ENCODE measurements at regions of chr2 and their contacts with region 1.

Region 1: DNA sequence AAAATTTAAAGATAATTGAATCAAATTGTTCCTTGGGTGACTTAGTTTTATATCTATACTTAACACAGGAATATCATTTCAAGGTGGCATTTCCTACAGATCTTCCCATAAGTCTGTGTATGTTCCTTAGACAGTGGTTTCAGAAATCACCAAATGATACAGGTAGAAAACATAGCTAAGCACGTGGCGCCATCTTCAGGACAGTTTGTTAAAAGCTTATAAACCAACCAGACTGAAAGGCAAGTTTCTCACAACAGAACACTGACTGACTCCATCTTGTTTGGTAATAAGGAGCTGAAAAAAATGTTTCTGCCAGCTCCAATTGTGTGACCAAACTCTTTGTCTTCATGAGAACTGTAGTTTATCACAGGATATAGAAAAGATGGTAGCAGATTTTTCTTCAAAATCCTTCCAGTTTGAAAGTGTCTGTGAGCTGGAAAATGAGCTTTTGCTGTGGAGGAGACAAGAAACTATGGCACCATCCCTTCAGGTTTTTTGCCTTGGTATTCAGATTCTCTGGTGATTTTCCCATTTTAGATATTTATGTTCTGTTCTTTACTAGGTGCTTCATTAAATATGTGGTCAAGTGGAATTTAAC is 34.8 kb upstream of the NEUROD1 start:
- DNase-seq: peak; percentile 70 to 74
- H3K4me3 ChIP-seq: no peak overlapping the region
- H3K27ac ChIP-seq: no peak overlapping the region
- H3K4me1 ChIP-seq: no peaks in the 10 kb centered on the region
- H3K27me3 ChIP-seq: no peaks in the 10 kb centered on the region
- CTCF ChIP-seq: peak; percentile 97

Region 2: GRCh38 chr2:181104512-181105115 is 610.5 kb before region 1 on chr2:
- CTCF ChIA-PET with region 1: interaction called, 12 read pairs
- POLR2A ChIA-PET with region 1: no interaction called
- intact Hi-C with region 1: loop called (anchors 1 kb)
- DNase-seq: peak in 1 of 2 experiments; percentile 28
- H3K4me3 ChIP-seq: no peak overlapping the region
- H3K27ac ChIP-seq: no peak overlapping the region
- H3K4me1 ChIP-seq: peaks cover 27% of the 10 kb centered on the region
- H3K27me3 ChIP-seq: no peaks in the 10 kb centered on the region
- CTCF ChIP-seq: peak; percentile 90

Region 3: DNA sequence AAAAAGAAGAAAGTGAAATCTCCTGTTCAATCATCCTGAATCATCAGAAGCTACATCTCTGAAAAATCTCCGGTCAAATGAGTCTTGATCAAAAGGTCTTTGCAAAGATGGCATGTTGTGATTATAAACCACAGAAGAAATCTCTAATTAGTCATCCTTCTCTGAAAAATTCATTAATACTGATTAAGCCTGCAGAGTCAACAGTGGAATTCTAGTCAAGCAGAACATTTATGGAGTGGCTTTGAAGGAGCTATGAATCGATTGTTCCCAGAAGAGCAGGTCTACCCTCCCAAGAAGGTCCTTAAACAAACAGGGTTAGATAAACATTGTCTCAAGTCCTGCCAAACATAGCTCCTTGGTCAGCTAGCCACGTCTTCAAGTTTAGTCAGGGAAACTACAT is 169.1 kb before region 1 on chr2:
- CTCF ChIA-PET with region 1: no interaction called
- POLR2A ChIA-PET with region 1: interaction called, 10 read pairs
- intact Hi-C with region 1: no loop called
- DNase-seq: peak; percentile 26 to 83
- H3K4me3 ChIP-seq: peak overlapping the region; percentile 41
- H3K27ac ChIP-seq: no peak overlapping the region
- H3K4me1 ChIP-seq: peaks cover 20% of the 10 kb centered on the region
- H3K27me3 ChIP-seq: no peaks in the 10 kb centered on the region
- CTCF ChIP-seq: no peak

Region 4: GRCh38 chr2:181656450-181657291 is 58.5 kb before region 1 on chr2 and contains the start of gene CERKL:
- CTCF ChIA-PET with region 1: interaction called, 11 read pairs
- POLR2A ChIA-PET with region 1: no interaction called
- intact Hi-C with region 1: no loop called
- DNase-seq: peak; percentile 48 to 89
- H3K4me3 ChIP-seq: peak within 1 kb of the TSS; percentile 52
- H3K27ac ChIP-seq: no peak within 1 kb of the TSS
- H3K4me1 ChIP-seq: 0 out of 2 replicates have a peak, but pooled peaks cover 6% of the 10 kb centered on the region
- H3K27me3 ChIP-seq: no peaks in the 10 kb centered on the region
- CTCF ChIP-seq: no peak
- total RNA-seq, gene CERKL: 1.5 and 1.6 TPM in 2 replicates

Region 5: GRCh38 chr2:181886192-181886591 is 171.1 kb after region 1 on chr2:
- CTCF ChIA-PET with region 1: no interaction called
- POLR2A ChIA-PET with region 1: no interaction called
- intact Hi-C with region 1: no loop called
- DNase-seq: no peak
- H3K4me3 ChIP-seq: no peak overlapping the region
- H3K27ac ChIP-seq: no peak overlapping the region
- H3K4me1 ChIP-seq: peaks cover 8% of the 10 kb centered on the region
- H3K27me3 ChIP-seq: no peaks in the 10 kb centered on the region
- CTCF ChIP-seq: no peak

Region 6: GRCh38 chr2:182650704-182651103 is 935.6 kb after region 1 on chr2:
- CTCF ChIA-PET with region 1: interaction called, 8 read pairs
- POLR2A ChIA-PET with region 1: no interaction called
- intact Hi-C with region 1: loop called (anchors 2 kb)
- DNase-seq: peak in 1 of 2 experiments; percentile 74
- H3K4me3 ChIP-seq: no peak overlapping the region
- H3K27ac ChIP-seq: no peak overlapping the region
- H3K4me1 ChIP-seq: no peaks in the 10 kb centered on the region
- H3K27me3 ChIP-seq: no peaks in the 10 kb centered on the region
- CTCF ChIP-seq: peak; percentile 85

Region 7: DNA sequence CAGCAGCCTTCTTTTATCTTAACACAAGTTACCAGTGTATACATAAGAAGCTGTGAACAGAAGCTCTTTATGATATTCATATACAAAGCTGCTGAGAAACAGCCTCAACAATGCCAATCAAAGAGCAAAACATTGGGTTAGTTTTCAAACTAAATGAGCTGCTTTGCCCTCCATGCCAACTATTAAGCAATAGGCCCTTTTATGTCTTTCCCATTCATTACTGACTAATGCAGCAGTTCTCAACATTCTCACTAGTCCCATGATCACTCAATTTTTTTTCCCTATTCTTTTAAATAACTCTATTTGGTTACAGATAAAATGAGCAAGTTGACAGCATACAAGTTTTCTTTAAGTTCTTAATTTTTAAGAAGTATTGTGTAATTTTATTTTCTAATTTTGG is 1209.2 kb after region 1 on chr2:
- CTCF ChIA-PET with region 1: no interaction called
- POLR2A ChIA-PET with region 1: no interaction called
- intact Hi-C with region 1: no loop called
- DNase-seq: no peak
- H3K4me3 ChIP-seq: no peak overlapping the region
- H3K27ac ChIP-seq: no peak overlapping the region
- H3K4me1 ChIP-seq: no peaks in the 10 kb centered on the region
- H3K27me3 ChIP-seq: no peaks in the 10 kb centered on the region
- CTCF ChIP-seq: no peak